T-cell (primary cell): ENCODE measurements at regions of chr1 and their contacts with region 1.

Region 1: GRCh38 chr1:245337829-245338484 is 183.2 kb downstream of the KIF26B start:
- DNase-seq: peak in 1 of 35 experiments; percentile 5
- ATAC-seq: no peak
- H3K4me3 ChIP-seq: no peak overlapping the region
- H3K4me3 Mint-ChIP-seq: peak overlapping the region in 1 of 3 donors; percentile 6
- H3K27ac ChIP-seq: no peak overlapping the region
- H3K27ac Mint-ChIP-seq: no peak overlapping the region
- H3K4me1 ChIP-seq: peaks cover 3 to 11% of the 10 kb centered on the region in 2 experiments
- H3K4me1 Mint-ChIP-seq: peaks cover 3 to 7% (median 7%) of the 10 kb centered on the region in 3 donors
- H3K27me3 ChIP-seq: peaks cover 0 to 3% of the 10 kb centered on the region in 2 experiments
- H3K27me3 Mint-ChIP-seq: peaks cover 0 to 3% of the 10 kb centered on the region in 2 donors

Region 2: GRCh38 chr1:245201827-245202226 is 136.1 kb before region 1 on chr1:
- CTCF ChIA-PET with region 1: no interaction called
- POLR2A ChIA-PET with region 1: no interaction called
- DNase-seq: no peak
- ATAC-seq: no peak
- H3K4me3 ChIP-seq: no peak overlapping the region
- H3K4me3 Mint-ChIP-seq: no peak overlapping the region
- H3K27ac ChIP-seq: no peak overlapping the region
- H3K27ac Mint-ChIP-seq: no peak overlapping the region
- H3K4me1 ChIP-seq: no peaks in the 10 kb centered on the region
- H3K4me1 Mint-ChIP-seq: peaks cover 0 to 6% (median 1%) of the 10 kb centered on the region in 3 donors
- H3K27me3 ChIP-seq: peaks cover 0 to 5% of the 10 kb centered on the region in 2 experiments
- H3K27me3 Mint-ChIP-seq: peaks cover 16 to 24% of the 10 kb centered on the region in 2 donors

Region 3: DNA sequence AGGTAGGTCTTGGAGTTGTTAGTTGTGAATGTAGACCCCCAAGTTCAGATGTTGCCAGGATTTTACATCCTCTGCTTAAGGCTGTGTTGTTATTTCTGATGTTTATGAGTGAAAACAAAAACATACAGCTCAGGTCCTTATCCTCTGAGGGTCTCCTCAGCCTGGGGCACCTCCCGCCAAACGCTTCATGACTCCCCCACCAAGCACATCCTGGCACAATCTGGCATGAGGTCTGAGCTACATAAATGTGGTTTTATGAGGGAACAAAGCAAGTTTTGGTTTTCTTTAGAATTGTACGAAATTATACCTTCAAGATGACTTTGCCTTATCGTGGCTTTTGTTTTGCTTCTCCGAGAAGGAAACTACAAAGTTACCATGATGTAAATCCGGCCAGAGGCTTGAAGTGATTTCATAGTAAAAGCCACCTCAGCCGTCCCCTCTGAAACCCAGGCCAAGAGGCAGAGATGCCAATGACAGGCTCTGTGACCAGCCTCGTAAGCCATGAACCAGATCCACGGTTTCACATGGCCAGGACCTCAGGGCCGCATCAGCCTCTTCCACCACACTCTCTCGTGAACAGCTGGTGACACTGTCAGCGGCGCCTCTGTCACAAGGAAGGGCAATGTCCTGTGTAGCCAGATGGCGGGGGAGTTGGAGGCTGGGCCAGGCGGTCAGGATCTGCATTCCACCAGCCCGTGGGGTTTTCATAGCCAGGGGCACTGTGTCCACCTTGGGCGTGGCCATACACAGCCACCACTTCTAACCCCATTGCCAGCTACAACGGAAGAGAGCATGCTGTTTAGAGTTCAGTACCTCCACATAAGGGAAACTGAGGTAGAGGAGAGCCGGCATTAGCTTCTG is 16.2 kb after region 1 on chr1:
- CTCF ChIA-PET with region 1: interaction called in 1 of 2 experiments, 4 read pairs
- POLR2A ChIA-PET with region 1: interaction called in 1 of 2 experiments, 11 read pairs
- DNase-seq: no peak
- ATAC-seq: no peak
- H3K4me3 ChIP-seq: no peak overlapping the region
- H3K4me3 Mint-ChIP-seq: no peak overlapping the region
- H3K27ac ChIP-seq: no peak overlapping the region
- H3K27ac Mint-ChIP-seq: no peak overlapping the region
- H3K4me1 ChIP-seq: peaks cover 0 to 5% of the 10 kb centered on the region in 2 experiments
- H3K4me1 Mint-ChIP-seq: peaks cover 0 to 10% (median 0%) of the 10 kb centered on the region in 3 donors
- H3K27me3 ChIP-seq: peaks cover 0 to 14% of the 10 kb centered on the region in 2 experiments
- H3K27me3 Mint-ChIP-seq: peaks cover 0 to 3% of the 10 kb centered on the region in 2 donors